ENCODE measurements at regions of chr6 and their contacts with region 1.

Region 1: GRCh38 chr6:65943051-65943450 is 236.0 kb upstream of the EYS start:
- DNase-seq: no peak
- ATAC-seq: no peak
- H3K4me3 ChIP-seq: no peak overlapping the region
- H3K27ac ChIP-seq: no peak overlapping the region
- H3K4me1 ChIP-seq: no peaks in the 10 kb centered on the region
- H3K27me3 ChIP-seq: no peaks in the 10 kb centered on the region
- CTCF ChIP-seq: no peak
- EP300 ChIP-seq: no peak
- POLR2A ChIP-seq: no peak
- RAD21 ChIP-seq: no peak

Region 2: DNA sequence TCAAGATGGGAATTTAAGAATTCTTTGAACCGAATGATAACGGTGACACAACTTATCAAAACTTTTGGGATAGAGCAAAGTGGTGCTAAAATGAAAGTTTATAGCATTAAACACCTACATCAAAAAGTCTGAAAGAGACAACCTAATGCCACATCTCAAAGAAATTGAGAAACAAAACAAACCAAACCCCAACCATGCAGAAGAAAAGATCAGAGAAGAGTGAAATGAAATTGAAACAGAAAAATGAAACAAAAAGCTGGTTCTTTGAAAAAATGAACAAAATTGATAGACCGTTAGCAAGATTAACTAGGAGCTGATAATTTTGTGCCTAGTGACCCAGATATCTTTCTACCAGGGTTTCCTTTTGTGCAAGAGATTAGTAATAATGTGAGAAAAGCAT is 12.0 kb after region 1 on chr6:
- CTCF ChIA-PET with region 1: interaction called, 3 read pairs
- POLR2A ChIA-PET with region 1: no interaction called
- RAD21 ChIA-PET with region 1: no interaction called
- SMC1A ChIA-PET with region 1: interaction called, 13 read pairs
- in situ Hi-C with region 1: no loop called
- intact Hi-C with region 1: no loop called
- DNase-seq: no peak
- ATAC-seq: peak; percentile 72
- H3K4me3 ChIP-seq: no peak overlapping the region
- H3K27ac ChIP-seq: no peak overlapping the region
- H3K4me1 ChIP-seq: no peaks in the 10 kb centered on the region
- H3K27me3 ChIP-seq: no peaks in the 10 kb centered on the region
- CTCF ChIP-seq: no peak
- EP300 ChIP-seq: no peak
- POLR2A ChIP-seq: no peak
- RAD21 ChIP-seq: no peak

Region 3: DNA sequence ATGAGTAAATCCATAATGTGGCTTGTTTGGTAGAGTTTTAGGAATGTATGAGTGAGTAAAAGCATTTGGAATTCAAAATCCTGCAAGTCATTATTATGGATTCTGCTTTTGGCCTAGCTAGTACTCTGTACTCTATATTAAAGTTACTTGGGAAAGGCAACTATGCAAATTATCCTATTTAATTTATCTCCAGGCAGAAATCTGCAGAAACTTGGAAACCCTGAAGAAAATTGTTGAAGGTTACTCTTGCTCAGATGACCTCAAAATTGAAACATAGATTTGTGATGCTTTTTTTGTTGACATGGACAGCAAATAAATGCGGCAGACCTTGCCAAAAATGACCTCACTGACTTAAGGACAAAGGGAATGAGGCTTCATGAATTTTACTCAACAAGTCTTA is 241.0 kb after region 1 on chr6:
- CTCF ChIA-PET with region 1: no interaction called
- POLR2A ChIA-PET with region 1: no interaction called
- RAD21 ChIA-PET with region 1: no interaction called
- SMC1A ChIA-PET with region 1: no interaction called
- in situ Hi-C with region 1: no loop called
- intact Hi-C with region 1: no loop called
- DNase-seq: no peak
- ATAC-seq: no peak
- H3K4me3 ChIP-seq: no peak overlapping the region
- H3K27ac ChIP-seq: no peak overlapping the region
- H3K4me1 ChIP-seq: no peaks in the 10 kb centered on the region
- H3K27me3 ChIP-seq: no peaks in the 10 kb centered on the region
- CTCF ChIP-seq: no peak
- EP300 ChIP-seq: no peak
- POLR2A ChIP-seq: no peak
- RAD21 ChIP-seq: no peak

Measured in GM12878 (cell line).